MCF 10A (cell line): ENCODE measurements at regions of chr11 and their contacts with region 1.

Region 1: GRCh38 chr11:60887556-60887955 is 18.8 kb downstream of the PRPF19 start:
- DNase-seq: peak; percentile 55
- H3K4me3 Mint-ChIP-seq: no peak overlapping the region
- H3K27ac Mint-ChIP-seq: no peak overlapping the region
- H3K4me1 Mint-ChIP-seq: no peaks in the 10 kb centered on the region
- H3K27me3 Mint-ChIP-seq: no peaks in the 10 kb centered on the region
- CTCF ChIP-seq: peak; percentile 49

Region 2: DNA sequence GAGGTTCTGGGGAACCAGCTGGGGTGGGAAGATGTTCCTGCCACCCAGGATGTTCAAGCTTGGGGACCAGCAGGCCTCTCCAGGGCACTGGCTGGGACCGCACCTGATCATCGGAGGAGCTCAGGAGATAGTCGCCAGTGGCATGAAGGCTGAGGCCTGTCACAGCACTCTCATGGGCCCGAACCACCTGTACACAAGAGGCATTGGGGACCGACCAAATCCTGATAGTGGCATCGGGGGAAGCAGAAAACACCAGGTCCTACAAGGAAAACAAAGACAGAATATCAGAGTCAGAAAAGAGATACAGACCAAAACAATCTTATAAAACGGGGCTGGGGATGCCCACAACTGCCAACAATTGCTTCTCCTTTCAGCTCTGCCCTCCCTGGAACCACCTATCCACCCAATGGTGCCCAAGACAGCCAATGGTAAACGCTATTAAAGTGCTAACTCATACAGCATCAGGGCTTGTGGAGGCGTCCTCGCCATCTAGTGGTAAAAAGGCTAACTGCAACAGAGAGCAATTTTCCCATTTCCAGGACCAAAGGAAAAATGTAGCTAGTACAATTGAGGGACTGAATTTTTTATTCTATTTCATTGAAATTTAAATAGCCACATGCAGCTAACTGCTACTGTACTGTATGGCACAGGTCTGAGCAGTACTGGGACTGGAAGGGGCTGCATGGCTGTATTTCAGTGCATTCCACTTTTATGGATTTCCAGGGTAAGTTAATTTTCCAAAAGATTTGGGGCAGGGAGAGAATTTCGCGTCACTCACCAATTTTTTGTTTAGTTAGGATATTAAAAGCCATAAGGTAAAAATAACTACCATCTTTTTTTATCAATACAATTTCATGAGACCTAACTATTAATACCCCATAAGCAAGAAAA is 11.7 kb after region 1 on chr11:
- CTCF ChIA-PET with region 1: interaction called, 47 read pairs
- POLR2A ChIA-PET with region 1: interaction called, 6 read pairs
- intact Hi-C with region 1: no loop called
- DNase-seq: peak; percentile 64
- H3K4me3 Mint-ChIP-seq: no peak overlapping the region
- H3K27ac Mint-ChIP-seq: no peak overlapping the region
- H3K4me1 Mint-ChIP-seq: peaks cover 5% of the 10 kb centered on the region
- H3K27me3 Mint-ChIP-seq: no peaks in the 10 kb centered on the region
- CTCF ChIP-seq: peak; percentile 92

Region 3: DNA sequence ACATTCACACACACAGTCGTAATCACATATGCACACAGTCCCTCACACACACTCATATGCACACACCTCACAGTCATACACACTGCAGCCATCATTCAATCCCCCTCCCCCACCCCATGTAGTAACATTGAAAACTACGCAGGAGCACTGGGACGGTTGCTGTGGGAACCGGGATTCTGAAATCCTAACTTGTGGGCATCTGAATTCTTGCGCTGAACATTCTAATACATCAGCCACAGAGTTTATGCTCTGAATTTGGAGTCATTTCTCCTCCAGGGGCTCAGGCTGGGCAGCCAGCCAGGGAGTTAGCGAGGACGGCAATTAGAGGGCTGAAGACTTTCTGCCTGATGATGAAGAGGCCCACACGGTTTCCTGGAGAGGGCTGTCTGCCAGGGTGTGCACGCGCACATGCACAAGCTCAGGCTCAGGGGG is 116.6 kb after region 1 on chr11:
- CTCF ChIA-PET with region 1: no interaction called
- POLR2A ChIA-PET with region 1: no interaction called
- intact Hi-C with region 1: no loop called
- DNase-seq: no peak
- H3K4me3 Mint-ChIP-seq: no peak overlapping the region
- H3K27ac Mint-ChIP-seq: no peak overlapping the region
- H3K4me1 Mint-ChIP-seq: no peaks in the 10 kb centered on the region
- H3K27me3 Mint-ChIP-seq: peaks cover 11% of the 10 kb centered on the region
- CTCF ChIP-seq: no peak